ENCODE measurements at regions of chr3 and their contacts with region 1.

Region 1: GRCh38 chr3:57555738-57556458 is at the start of gene PDE12:
- DNase-seq: peak; percentile 88
- ATAC-seq: peak; percentile 95
- total RNA-seq, gene PDE12: 9.8 to 16.2 TPM

Region 2: DNA sequence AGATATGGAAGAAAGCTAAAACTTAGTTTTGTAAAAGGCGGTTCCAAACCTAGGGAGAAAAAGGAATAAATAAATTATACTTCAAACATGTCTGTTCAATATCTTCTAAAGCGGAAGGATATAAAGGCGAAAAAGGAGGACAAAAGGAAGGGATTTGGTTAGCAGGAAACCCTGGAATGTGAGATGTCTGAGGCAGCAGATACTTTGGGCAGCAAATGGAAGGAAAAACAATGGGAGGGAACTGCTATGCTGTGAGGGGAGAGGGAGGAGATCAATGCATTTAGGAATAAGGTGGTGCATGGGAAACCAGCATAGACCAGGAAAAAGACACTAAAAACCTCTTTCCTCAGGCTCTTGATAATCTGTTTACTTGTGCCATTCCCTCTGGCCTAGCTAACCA is 132.6 kb before region 1 on chr3:
- intact Hi-C with region 1: no loop called
- DNase-seq: no peak
- ATAC-seq: no peak

Region 3: DNA sequence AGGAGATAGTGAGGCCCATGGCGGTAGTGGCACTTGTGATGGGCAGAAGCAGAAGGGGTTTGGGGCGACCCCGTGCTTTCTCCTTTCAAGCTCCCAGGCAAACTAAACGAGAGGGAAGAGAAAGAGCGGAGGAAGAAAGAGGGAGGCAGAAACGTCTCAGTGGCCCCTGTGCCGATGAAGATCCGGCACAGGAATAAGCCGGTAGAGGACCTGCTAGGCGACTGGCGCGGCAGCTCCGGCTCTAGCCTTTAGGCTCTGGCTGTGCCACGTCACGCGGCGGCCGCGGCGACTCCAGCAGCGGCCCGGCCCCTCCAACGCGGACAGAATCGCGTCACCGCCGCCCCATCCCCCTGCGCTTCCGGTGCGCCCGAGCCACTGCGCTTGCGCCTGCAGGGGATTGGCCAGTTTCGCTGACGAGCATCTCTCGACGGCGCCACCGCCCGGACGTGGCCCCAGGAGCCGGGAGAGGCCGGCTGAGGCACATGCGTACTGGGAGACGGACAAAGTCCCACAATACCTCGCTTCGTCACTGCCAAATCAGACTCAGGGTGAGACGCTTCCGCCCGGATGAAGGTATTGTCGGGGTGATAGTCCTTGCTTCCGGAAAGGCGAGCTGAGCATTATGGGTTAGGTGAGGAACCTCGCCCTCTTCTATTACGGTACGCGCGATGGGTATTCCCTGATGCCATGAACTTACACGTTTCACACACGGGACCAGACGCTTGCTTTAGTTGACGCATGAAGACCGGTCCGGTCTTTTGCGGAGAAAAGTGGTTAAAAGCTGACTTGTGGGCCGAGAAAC is 41.4 kb after region 1 on chr3 and contains the start of gene ARF4:
- intact Hi-C with region 1: loop called (anchors 5 kb)
- DNase-seq: peak; percentile 99
- ATAC-seq: peak; percentile 95
- total RNA-seq, gene ARF4: 80.1 to 114 TPM

Measured in left cardiac atrium (tissue), 4 donors.